Sciatic nerve (tissue), 2 donors: ENCODE measurements at regions of chr12 and their contacts with region 1.

Region 1: GRCh38 chr12:108856428-108857157 is 790 bp downstream of the SSH1 start:
- DNase-seq: peak; percentile 79
- ATAC-seq: peak; percentile 33

Region 2: DNA sequence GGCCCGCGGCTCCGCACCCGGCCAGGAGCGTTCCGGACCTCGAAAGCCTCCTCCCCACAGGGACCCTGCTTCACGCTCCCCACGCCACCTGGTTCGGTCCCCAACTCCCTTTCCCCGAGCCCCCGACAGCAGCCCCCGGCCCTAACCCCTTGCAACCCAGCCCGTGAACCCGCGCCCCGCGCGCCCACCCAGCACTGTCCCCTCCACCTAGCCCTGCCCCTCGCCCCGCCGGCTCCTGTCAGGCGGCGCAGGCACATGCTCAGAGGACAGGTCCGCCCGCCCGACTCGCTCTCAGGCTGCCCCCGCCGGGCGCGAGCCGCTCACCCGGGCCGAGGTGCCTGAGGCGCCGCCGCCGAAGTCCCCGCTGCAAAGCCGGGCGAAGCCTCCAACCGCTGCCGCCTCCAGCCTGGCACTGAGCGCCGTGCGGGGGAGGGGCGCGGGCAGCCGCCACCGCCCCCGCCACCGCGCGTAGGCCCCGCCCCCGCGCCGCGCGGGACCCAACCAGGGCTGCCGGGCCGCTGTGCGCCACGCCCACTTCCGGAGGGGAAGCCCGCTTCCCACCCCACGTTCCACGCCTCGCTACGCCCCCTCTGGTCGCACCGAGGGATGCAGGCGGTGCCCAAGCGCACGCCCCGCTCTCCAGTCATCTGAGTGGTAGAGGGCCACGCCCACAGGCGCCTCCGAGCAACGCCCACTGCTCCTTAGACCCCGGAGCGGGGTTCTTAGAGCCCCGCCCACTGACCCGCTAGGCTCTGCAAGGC is 125.3 kb before region 1 on chr12 and contains the start of gene CORO1C:
- intact Hi-C with region 1: loop called (anchors 5 kb)
- DNase-seq: peak; percentile 98
- ATAC-seq: peak; percentile 88
- total RNA-seq, gene CORO1C: 194 TPM

Region 3: GRCh38 chr12:108816652-108817335 is 39.8 kb before region 1 on chr12:
- intact Hi-C with region 1: loop called (anchors 5 kb)
- DNase-seq: no peak
- ATAC-seq: peak; percentile 12